ENCODE measurements at regions of chr12 and their contacts with region 1.

Region 1: DNA sequence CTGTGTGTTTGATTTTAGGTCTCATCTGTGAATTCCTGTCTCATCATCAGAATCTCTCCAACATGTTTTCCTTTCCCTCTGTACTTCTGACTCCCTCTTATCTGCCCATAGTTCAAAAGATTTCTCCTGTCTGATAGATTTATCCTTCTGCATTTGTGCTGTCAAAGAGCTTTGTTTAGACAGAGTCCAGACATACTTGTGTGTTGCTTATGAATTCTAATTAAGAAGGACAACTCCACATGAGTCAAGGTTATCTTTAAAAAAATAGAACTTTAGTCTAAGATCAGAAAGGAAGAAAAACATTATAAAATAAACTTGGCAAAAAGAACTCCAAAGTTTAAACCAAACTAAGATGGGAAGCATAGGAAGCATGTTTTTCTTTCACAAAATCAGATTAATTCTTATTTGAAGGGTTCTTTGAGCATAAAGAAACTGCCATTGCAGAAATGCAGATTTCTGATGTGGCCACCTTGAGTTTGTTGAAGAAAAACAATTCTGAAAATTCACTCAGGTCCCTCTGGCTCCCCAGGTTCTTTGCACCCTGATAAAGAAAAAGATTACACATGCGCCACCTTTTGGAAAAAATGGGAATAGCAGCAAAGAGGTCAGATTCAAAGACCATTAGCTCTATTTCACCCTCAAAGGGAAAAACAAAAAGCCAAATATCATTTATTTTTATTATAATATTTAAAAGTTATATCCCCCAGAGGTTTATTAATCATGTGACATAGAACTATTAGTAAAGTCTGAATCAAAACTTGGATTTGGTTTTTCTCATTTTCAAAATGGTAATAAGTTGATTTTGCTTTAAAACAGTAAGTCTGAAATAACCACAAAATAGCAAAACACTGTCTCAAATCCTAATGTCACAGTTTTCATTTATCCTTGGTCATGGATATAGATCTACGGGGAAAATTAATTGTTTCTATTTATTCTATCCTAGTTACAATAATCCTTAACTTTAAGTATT is 143.7 kb upstream of the DCN start:
- DNase-seq: peak; percentile 59
- H3K4me3 ChIP-seq: no peak overlapping the region
- H3K27ac ChIP-seq: no peak overlapping the region
- H3K4me1 ChIP-seq: no peaks in the 10 kb centered on the region
- H3K27me3 ChIP-seq: no peaks in the 10 kb centered on the region
- CTCF ChIP-seq: peak; percentile 49 to 54
- POLR2A ChIP-seq: no peak

Region 2: GRCh38 chr12:90959538-90960139 is 366.7 kb before region 1 on chr12:
- CTCF ChIA-PET with region 1: interaction called, 11 read pairs
- POLR2A ChIA-PET with region 1: no interaction called
- dilution Hi-C with region 1: no loop called
- intact Hi-C with region 1: no loop called
- DNase-seq: peak; percentile 54
- H3K4me3 ChIP-seq: no peak overlapping the region
- H3K27ac ChIP-seq: no peak overlapping the region
- H3K4me1 ChIP-seq: no peaks in the 10 kb centered on the region
- H3K27me3 ChIP-seq: no peaks in the 10 kb centered on the region
- CTCF ChIP-seq: peak; percentile 57 to 74
- POLR2A ChIP-seq: no peak

Region 3: GRCh38 chr12:90999966-91000365 is 326.4 kb before region 1 on chr12:
- CTCF ChIA-PET with region 1: interaction called, 10 read pairs
- POLR2A ChIA-PET with region 1: no interaction called
- dilution Hi-C with region 1: no loop called
- intact Hi-C with region 1: no loop called
- DNase-seq: no peak
- H3K4me3 ChIP-seq: no peak overlapping the region
- H3K27ac ChIP-seq: no peak overlapping the region
- H3K4me1 ChIP-seq: no peaks in the 10 kb centered on the region
- H3K27me3 ChIP-seq: no peaks in the 10 kb centered on the region
- CTCF ChIP-seq: no peak
- POLR2A ChIP-seq: no peak

Region 4: GRCh38 chr12:91178139-91178561 is 148.2 kb before region 1 on chr12:
- CTCF ChIA-PET with region 1: interaction called, 107 read pairs
- POLR2A ChIA-PET with region 1: no interaction called
- dilution Hi-C with region 1: no loop called
- intact Hi-C with region 1: loop called (anchors 1 kb)
- DNase-seq: peak; percentile 51
- H3K4me3 ChIP-seq: no peak overlapping the region
- H3K27ac ChIP-seq: no peak overlapping the region
- H3K4me1 ChIP-seq: peaks cover 10% of the 10 kb centered on the region
- H3K27me3 ChIP-seq: no peaks in the 10 kb centered on the region
- CTCF ChIP-seq: peak; percentile 25 to 32
- POLR2A ChIP-seq: no peak

Region 5: GRCh38 chr12:91347481-91348214 is 21.3 kb after region 1 on chr12:
- CTCF ChIA-PET with region 1: interaction called, 11 read pairs
- POLR2A ChIA-PET with region 1: no interaction called
- dilution Hi-C with region 1: no loop called
- intact Hi-C with region 1: no loop called
- DNase-seq: no peak
- H3K4me3 ChIP-seq: no peak overlapping the region
- H3K27ac ChIP-seq: no peak overlapping the region
- H3K4me1 ChIP-seq: no peaks in the 10 kb centered on the region
- H3K27me3 ChIP-seq: no peaks in the 10 kb centered on the region
- CTCF ChIP-seq: no peak
- POLR2A ChIP-seq: no peak

Region 6: DNA sequence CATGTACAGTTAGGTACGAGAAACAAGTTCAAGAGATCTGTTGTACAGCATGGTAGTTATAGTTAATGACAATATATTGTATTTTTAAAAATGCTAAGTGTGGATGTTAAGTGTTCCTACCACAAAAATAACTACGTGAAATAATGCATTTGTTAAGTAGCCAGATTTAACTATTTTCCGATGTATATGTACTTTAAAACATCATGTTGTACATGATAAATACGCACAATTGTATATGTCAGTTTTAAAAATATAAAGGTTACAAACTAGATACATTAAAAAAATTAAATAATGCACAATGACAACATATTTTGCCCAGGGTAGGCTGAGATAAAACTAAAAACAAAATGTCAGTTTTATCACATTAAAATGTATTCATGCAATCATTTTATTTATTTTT is 141.3 kb after region 1 on chr12:
- CTCF ChIA-PET with region 1: no interaction called
- POLR2A ChIA-PET with region 1: no interaction called
- dilution Hi-C with region 1: no loop called
- intact Hi-C with region 1: no loop called
- DNase-seq: no peak
- H3K4me3 ChIP-seq: no peak overlapping the region
- H3K27ac ChIP-seq: no peak overlapping the region
- H3K4me1 ChIP-seq: no peaks in the 10 kb centered on the region
- H3K27me3 ChIP-seq: no peaks in the 10 kb centered on the region
- CTCF ChIP-seq: no peak
- POLR2A ChIP-seq: no peak

Measured in endothelial cell of umbilical vein (primary cell).